Cardiac septum (tissue), 1 donor: ENCODE measurements at regions of chr15 and their contacts with region 1.

Region 1: GRCh38 chr15:31488426-31489204 is 162.0 kb downstream of the KLF13 start:
- DNase-seq: no peak

Region 2: GRCh38 chr15:30903497-30904201 is 585.0 kb before region 1 on chr15 and contains the start of gene FAN1:
- intact Hi-C with region 1: loop called (anchors 10 kb)
- DNase-seq: peak; percentile 92
- total RNA-seq, gene FAN1: 15.9 TPM

Region 3: DNA sequence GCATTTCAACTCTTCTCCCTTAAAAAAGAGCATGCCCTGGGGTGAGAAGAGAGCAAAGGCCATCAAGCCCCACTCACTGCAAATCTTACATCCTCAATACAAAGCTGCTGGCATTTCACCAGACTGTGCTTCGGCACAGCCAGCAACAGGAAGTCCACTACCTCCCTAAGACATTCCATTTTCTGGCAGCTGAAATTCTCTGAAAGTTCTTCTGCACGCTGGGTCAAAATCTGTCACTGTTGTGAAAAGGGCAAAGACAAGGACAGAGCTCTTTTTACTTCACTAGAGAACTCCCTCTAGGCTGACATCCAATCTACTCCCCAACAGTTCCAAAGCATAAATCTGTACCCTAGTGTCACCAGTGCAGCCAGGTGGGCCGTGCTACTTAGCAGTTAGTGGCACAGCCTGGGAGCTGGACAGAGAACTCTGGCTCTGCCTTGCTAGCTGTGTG is 503.5 kb before region 1 on chr15:
- intact Hi-C with region 1: loop called (anchors 10 kb)
- DNase-seq: no peak

Region 4: DNA sequence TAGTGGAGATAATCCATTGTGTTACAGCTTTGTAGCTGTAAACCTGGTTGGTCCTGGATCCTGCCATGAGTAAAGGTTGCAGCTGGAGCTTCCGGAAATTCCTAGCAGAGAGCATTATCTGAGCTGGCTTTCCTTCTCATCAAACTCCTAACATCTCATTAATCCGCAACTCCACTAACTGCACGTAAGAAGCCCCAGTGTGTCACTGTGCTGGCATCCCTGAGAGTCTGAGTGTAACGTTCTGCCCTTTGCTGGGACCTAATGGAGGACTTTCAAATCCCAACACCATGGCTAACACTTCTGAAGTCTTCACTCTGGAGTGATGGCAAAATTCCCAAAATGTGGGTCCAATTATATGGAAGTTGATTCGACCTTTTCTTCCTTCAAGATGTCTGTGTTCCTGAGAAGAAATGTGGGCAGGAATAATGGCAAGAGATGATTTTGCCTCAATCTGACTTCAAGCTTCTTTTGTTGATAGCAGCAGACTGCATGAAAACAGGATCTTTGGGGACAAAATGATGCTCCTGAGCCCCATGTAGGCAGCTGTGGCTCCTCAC is 377.4 kb before region 1 on chr15:
- intact Hi-C with region 1: no loop called
- DNase-seq: no peak

Region 5: GRCh38 chr15:31200735-31201151 is 287.9 kb before region 1 on chr15:
- intact Hi-C with region 1: loop called (anchors 2 kb)
- DNase-seq: no peak

Region 6: GRCh38 chr15:31365655-31366127 is 122.9 kb before region 1 on chr15:
- intact Hi-C with region 1: loop called (anchors 10 kb)
- DNase-seq: peak; percentile 92

Region 7: DNA sequence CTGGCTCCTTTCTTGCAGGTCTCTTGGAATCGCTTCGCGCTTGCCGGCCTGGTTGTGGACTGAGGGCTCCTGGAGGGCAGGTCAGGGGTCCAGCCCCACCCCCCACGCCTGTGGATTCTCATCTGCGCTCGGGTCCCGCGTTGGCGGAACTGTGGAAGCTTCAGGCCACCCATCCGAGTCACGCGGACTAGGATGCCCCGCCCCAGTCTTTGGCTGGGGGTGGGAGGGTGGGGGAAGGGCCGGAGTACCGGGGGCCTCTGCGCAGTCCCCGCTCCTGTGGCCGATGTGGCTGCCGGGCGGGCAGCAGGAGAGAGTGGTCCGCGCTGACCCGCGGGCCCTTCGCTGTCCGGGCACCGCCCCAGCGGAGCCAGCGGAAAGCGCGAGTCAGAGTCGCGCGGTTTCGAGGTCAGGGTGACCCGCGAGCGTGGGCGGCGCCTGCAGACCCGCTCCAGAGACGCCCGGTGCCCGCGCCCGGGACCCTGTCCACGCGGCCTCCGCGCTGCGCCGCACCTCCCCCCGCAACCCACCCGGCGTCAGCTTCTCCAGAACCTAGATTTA is 47.8 kb before region 1 on chr15:
- intact Hi-C with region 1: loop called (anchors 2 kb)
- DNase-seq: peak; percentile 89

Region 8: GRCh38 chr15:31586841-31587240 is 98.2 kb after region 1 on chr15:
- intact Hi-C with region 1: no loop called
- DNase-seq: no peak